Gastrocnemius medialis (tissue), 4 donors: ENCODE measurements at regions of chr11 and their contacts with region 1.

Region 1: DNA sequence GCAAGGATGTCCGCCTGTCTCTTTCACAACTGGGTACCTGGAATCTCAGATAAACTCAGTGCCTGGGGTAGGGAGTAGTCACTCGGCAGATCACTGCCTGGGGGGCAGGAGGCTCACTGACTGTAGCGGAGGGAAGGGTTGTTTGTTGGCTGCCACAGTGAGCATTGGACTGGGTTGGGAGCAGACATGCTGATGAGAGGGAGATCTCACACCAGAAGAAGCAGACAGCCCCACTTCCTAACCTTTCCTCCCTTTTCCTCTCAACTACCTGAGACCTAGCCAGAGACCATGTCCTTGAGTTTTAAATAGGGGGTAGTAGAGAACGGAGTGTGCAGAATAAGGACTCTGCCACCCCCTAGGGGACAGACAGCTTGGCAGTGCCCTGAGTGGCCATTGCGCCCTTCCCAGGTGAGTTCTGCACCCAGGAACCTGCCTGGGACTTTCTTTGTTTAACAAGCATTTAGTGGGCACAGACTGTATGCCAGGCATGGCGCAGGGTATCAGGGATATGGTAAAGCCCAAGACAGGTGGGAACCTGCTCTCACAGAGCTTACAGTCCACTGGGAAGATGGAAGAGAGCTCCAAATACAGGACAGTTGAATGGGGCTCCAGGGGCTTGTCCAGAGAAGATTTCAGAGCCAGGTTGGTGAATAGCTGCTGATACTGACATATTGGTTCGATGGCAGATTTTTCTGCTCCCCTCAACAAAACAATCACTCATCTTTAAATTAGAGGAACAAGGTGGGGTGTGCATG is 115.7 kb upstream of the NNMT start:
- DNase-seq: peak in 1 of 2 donors; percentile 81
- ATAC-seq: peak; percentile 2 to 18
- H3K4me3 ChIP-seq: peak overlapping the region; percentile 49 to 64 (median 57)
- H3K27ac ChIP-seq: peak overlapping the region; percentile 94 to 99 (median 96)
- H3K4me1 ChIP-seq: peaks cover 86 to 90% of the 10 kb centered on the region in 2 donors
- H3K27me3 ChIP-seq: no peaks in the 10 kb centered on the region
- CTCF ChIP-seq: peak in 4 of 5 experiments; percentile 48 to 70 (median 63)
- POLR2A ChIP-seq: no peak

Region 2: DNA sequence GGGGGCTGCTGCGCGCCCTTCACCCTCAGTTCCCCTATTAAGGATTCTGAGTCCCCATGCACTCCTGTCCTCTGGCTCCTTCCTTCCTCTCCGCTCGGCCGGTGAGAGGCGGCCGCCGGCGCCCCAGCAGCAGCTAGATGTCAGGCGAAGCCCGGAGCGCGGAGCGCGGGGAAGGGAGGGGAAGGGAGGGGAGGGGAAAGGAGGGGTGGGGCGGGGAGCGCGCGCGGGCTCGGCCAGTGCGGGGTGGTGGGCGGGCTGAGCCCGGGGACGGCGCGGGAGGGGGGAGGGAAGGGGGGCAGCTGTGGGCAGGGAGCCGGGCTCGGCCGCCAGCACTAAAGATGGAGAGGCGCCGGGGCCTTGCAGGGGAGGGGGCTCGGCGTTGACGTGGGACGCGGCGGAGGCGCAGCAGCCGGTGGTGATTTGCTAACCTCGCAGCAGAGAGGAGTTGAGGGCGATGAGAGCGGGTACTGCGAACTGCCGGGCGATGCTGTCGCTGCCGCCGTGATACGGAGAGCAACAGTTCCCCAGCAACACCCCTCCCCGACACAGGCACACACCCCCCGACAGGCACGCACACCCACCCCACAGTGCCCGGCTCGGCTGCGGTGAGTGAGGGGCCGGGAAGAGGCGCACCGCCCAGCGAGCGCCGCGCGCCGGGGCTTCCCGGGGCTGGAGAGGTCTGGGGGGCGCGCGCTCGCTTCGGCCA is 121.0 kb before region 1 on chr11 and contains the start of gene ZBTB16:
- in situ Hi-C with region 1: loop called in 3 of 4 experiments (anchors 5 to 10 kb)
- intact Hi-C with region 1: no loop called
- DNase-seq: peak; percentile 88 to 91
- ATAC-seq: peak; percentile 22 to 28
- H3K4me3 ChIP-seq: peak within 1 kb of the TSS; percentile 68 to 100 (median 82)
- H3K27ac ChIP-seq: peak within 1 kb of the TSS; percentile 94 to 99 (median 96)
- H3K4me1 ChIP-seq: peaks cover 31 to 55% of the 10 kb centered on the region in 2 donors
- H3K27me3 ChIP-seq: no peaks in the 10 kb centered on the region
- CTCF ChIP-seq: peak in 3 of 5 experiments; percentile 41 to 76 (median 49)
- POLR2A ChIP-seq: peak; percentile 93 to 98
- total RNA-seq, gene ZBTB16: 156 to 250 (median 196) TPM

Region 3: GRCh38 chr11:114073828-114074381 is 106.6 kb before region 1 on chr11:
- in situ Hi-C with region 1: loop called in 3 of 4 experiments (anchors 5 to 10 kb)
- intact Hi-C with region 1: loop called (anchors 5 kb)
- DNase-seq: peak in 1 of 2 donors; percentile 46
- ATAC-seq: no peak
- H3K4me3 ChIP-seq: peak overlapping the region; percentile 46 to 54 (median 50)
- H3K27ac ChIP-seq: peak overlapping the region; percentile 94 to 99 (median 96)
- H3K4me1 ChIP-seq: peaks cover 82 to 96% of the 10 kb centered on the region in 2 donors
- H3K27me3 ChIP-seq: no peaks in the 10 kb centered on the region
- CTCF ChIP-seq: no peak
- POLR2A ChIP-seq: peak in 1 of 2 donors; percentile 53

Region 4: GRCh38 chr11:114159802-114160632 is 20.5 kb before region 1 on chr11:
- in situ Hi-C with region 1: no loop called
- intact Hi-C with region 1: loop called (anchors 1 kb)
- DNase-seq: peak; percentile 95 to 100
- ATAC-seq: peak; percentile 26 to 32
- H3K4me3 ChIP-seq: peak overlapping the region; percentile 48 to 62 (median 58)
- H3K27ac ChIP-seq: peak overlapping the region; percentile 94 to 99 (median 96)
- H3K4me1 ChIP-seq: peaks cover 81 to 91% of the 10 kb centered on the region in 2 donors
- H3K27me3 ChIP-seq: no peaks in the 10 kb centered on the region
- CTCF ChIP-seq: no peak
- POLR2A ChIP-seq: no peak

Region 5: GRCh38 chr11:114257621-114258558 is 77.4 kb after region 1 on chr11:
- in situ Hi-C with region 1: loop called in 1 of 4 experiments (anchors 10 kb)
- intact Hi-C with region 1: no loop called
- DNase-seq: peak; percentile 63 to 84
- ATAC-seq: peak; percentile 8 to 18
- H3K4me3 ChIP-seq: peak overlapping the region in 2 of 4 donors; percentile 17 to 26
- H3K27ac ChIP-seq: peak overlapping the region; percentile 87 to 98 (median 95)
- H3K4me1 ChIP-seq: peaks cover 67 to 89% of the 10 kb centered on the region in 2 donors
- H3K27me3 ChIP-seq: no peaks in the 10 kb centered on the region
- CTCF ChIP-seq: peak in 2 of 5 experiments; percentile 38 to 40
- POLR2A ChIP-seq: peak in 1 of 2 donors; percentile 12